SK-N-SH (cell line): ENCODE measurements at regions of chr10 and their contacts with region 1.

Region 1: DNA sequence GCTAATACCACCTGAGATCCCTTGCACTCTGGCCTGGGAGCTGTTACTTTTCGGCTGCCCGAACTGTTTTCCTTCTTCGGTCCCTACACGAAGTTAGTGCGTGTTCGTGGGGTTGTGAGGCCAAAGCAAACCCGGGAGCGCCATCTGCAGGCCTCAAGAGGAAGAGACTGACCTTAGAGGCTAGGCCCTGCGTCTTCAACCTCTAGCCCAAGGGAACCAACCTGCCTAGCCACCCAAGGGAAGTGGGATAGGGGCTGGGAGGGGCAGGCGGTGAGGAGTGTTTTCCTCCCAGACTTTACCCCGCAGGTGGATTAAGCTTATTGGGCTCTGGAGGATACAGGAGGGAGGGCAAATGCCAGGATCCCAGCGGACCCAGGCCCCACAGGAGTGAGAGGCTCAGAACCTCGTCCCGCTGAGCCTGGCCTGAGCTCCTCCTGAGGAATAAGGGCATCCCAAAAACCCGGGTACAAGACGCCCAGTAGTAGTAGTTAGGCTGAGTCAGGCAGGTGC is 1.7 kb upstream of the PAX2 start:
- DNase-seq: peak; percentile 85
- H3K4me3 ChIP-seq: no peak overlapping the region; a peak in 2 of 4 replicates
- H3K27ac ChIP-seq: no peak overlapping the region
- H3K4me1 ChIP-seq: peaks cover 0 to 21% of the 10 kb centered on the region in 2 experiments; a peak in 1 of 4 replicates
- H3K27me3 ChIP-seq: peaks cover 98% of the 10 kb centered on the region
- CTCF ChIP-seq: peak; percentile 73
- EP300 ChIP-seq: no peak
- RAD21 ChIP-seq: peak; percentile 87

Region 2: DNA sequence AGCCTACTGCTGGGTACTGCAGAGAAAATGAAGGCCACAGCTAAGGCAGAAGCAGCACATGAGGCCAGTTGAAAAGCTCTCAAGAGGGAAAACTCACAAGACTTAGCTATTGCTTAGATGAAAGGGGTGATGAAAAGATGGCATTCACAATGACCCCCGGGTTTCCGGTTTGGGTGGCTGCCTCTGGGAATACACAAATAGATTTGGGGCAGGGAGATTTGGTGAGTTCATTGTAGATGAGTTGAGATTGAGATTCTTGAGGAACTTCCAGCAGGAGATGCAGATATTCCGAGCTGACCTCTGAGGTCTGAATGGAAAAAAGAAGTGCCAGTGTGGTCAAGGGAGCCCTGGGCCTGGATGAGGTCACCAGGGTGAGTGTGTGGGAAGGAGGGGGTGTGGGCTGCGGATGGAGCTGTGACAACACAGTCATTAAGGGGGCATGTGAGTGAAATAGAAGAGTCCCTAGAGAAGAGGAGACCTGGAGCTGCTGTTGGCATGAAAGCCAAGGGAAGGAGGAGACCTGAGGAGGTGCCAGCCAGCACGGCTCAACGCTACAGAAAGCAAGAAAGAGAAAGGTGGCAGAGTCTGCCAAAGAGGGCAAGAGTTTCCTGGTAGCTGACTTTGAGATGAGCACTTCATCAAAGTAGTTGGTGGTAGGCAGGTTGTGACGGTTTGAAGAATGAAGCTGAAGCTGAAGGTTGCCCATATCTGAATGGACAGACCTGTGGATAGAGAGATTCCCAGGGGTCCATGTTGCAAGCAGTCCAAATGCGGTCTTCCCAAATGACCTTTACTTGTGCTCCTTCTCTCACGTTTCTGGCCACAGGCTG is 164.2 kb before region 1 on chr10:
- CTCF ChIA-PET with region 1: interaction called, 11 read pairs
- POLR2A ChIA-PET with region 1: no interaction called
- DNase-seq: no peak
- H3K4me3 ChIP-seq: no peak overlapping the region
- H3K27ac ChIP-seq: no peak overlapping the region
- H3K4me1 ChIP-seq: no peaks in the 10 kb centered on the region
- H3K27me3 ChIP-seq: peaks cover 46% of the 10 kb centered on the region
- CTCF ChIP-seq: no peak
- EP300 ChIP-seq: no peak
- RAD21 ChIP-seq: no peak

Region 3: GRCh38 chr10:100677290-100677945 is 66.3 kb before region 1 on chr10:
- CTCF ChIA-PET with region 1: interaction called, 60 read pairs
- POLR2A ChIA-PET with region 1: no interaction called
- DNase-seq: no peak
- H3K4me3 ChIP-seq: no peak overlapping the region
- H3K27ac ChIP-seq: no peak overlapping the region
- H3K4me1 ChIP-seq: peaks cover 0 to 2% of the 10 kb centered on the region in 2 experiments; a peak in 1 of 4 replicates
- H3K27me3 ChIP-seq: peaks cover 27% of the 10 kb centered on the region; the same call in 1 of the 2 replicates
- CTCF ChIP-seq: no peak
- EP300 ChIP-seq: no peak
- RAD21 ChIP-seq: no peak

Region 4: DNA sequence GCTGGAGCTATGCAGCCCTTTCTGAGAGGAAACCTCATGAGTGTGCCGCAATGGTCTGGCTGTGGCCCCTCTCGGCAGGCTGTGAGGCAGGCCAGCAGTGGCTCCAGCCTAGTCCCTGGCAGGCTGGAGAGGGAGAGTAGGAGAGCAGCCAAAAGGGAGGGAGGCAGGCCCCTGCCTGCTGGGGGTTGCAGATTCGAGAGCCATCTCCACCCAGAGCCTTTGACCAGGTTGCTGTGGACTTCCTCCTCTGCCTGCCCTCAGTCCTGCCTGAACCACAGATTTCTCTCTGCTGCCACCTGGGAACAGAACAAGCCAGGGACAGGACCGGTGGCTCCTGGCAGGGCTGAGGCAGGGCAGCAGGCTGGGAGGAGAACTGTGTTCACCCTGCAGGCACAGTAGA is 15.7 kb after region 1 on chr10:
- CTCF ChIA-PET with region 1: interaction called, 63 read pairs
- POLR2A ChIA-PET with region 1: no interaction called
- DNase-seq: peak; percentile 34
- H3K4me3 ChIP-seq: no peak overlapping the region
- H3K27ac ChIP-seq: no peak overlapping the region
- H3K4me1 ChIP-seq: peaks cover 0 to 7% of the 10 kb centered on the region in 2 experiments; a peak in 1 of 4 replicates
- H3K27me3 ChIP-seq: peaks cover 67% of the 10 kb centered on the region
- CTCF ChIP-seq: no peak
- EP300 ChIP-seq: no peak
- RAD21 ChIP-seq: no peak; the same call in 1 of the 2 replicates

Region 5: GRCh38 chr10:100827819-100828737 is 84.4 kb after region 1 on chr10:
- CTCF ChIA-PET with region 1: interaction called, 54 read pairs
- POLR2A ChIA-PET with region 1: no interaction called
- DNase-seq: peak; percentile 91
- H3K4me3 ChIP-seq: peak overlapping the region; percentile 38 to 39
- H3K27ac ChIP-seq: no peak overlapping the region
- H3K4me1 ChIP-seq: peaks cover 0 to 17% of the 10 kb centered on the region in 2 experiments; a peak in 1 of 4 replicates
- H3K27me3 ChIP-seq: peaks cover 77% of the 10 kb centered on the region
- CTCF ChIP-seq: no peak; the same call in 1 of the 2 replicates
- EP300 ChIP-seq: no peak
- RAD21 ChIP-seq: peak; percentile 64

Region 6: DNA sequence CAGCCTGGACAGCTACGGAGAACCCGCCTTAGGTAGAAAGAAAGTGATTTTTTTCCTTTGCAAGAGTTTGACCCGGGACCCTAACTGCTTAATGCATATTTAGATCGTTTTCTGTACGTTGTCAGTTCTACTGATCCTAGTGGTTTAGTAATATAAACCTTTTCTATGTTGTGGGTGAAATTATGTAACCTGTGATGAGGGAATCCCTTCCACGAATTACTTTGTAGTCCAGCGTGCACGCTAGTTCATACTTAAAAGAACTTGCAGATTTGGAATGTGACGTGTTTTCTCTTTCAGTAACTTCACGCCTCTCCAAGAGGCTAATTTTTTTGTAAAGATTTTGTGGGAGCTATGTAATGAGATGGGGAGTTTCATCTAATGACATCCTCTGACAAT is 169.8 kb after region 1 on chr10:
- CTCF ChIA-PET with region 1: no interaction called
- POLR2A ChIA-PET with region 1: no interaction called
- DNase-seq: no peak
- H3K4me3 ChIP-seq: peak overlapping the region; percentile 78 to 99
- H3K27ac ChIP-seq: peak overlapping the region; percentile 7 to 76; a peak in 2 of 4 replicates
- H3K4me1 ChIP-seq: peaks cover 17 to 23% of the 10 kb centered on the region in 2 experiments; a peak in 3 of 4 replicates
- H3K27me3 ChIP-seq: no peaks in the 10 kb centered on the region
- CTCF ChIP-seq: no peak
- EP300 ChIP-seq: no peak
- RAD21 ChIP-seq: no peak

Region 7: DNA sequence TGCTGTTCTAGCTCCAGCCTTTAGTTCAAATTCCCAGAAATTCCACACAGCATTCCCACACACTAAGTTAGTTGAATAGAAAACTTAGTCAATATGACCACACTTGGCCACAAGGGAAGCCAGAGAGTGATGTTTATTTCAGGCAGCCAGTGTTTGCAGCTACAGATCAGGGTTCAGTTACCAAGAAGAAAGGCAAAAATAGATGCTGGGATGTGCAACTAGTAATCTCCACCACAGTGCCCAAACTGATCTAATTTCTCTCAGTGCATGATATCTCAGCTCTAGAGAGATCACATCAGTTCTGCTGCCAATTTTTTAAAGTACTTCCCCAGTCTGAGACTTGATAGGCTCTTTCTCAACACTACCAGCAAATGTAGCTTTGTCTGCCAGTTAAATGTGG is 186.7 kb after region 1 on chr10:
- CTCF ChIA-PET with region 1: no interaction called
- POLR2A ChIA-PET with region 1: no interaction called
- DNase-seq: no peak
- H3K4me3 ChIP-seq: no peak overlapping the region
- H3K27ac ChIP-seq: no peak overlapping the region
- H3K4me1 ChIP-seq: no peaks in the 10 kb centered on the region
- H3K27me3 ChIP-seq: no peaks in the 10 kb centered on the region
- CTCF ChIP-seq: peak; percentile 28; the same call in 1 of the 2 replicates
- EP300 ChIP-seq: no peak
- RAD21 ChIP-seq: no peak